Right ventricle myocardium inferior (tissue), 1 donor: ENCODE measurements at regions of chr4 and their contacts with region 1.

Region 1: GRCh38 chr4:168480931-168481611 is 779 bp upstream of the DDX60L start:
- DNase-seq: no peak
- ATAC-seq: peak; percentile 65

Region 2: DNA sequence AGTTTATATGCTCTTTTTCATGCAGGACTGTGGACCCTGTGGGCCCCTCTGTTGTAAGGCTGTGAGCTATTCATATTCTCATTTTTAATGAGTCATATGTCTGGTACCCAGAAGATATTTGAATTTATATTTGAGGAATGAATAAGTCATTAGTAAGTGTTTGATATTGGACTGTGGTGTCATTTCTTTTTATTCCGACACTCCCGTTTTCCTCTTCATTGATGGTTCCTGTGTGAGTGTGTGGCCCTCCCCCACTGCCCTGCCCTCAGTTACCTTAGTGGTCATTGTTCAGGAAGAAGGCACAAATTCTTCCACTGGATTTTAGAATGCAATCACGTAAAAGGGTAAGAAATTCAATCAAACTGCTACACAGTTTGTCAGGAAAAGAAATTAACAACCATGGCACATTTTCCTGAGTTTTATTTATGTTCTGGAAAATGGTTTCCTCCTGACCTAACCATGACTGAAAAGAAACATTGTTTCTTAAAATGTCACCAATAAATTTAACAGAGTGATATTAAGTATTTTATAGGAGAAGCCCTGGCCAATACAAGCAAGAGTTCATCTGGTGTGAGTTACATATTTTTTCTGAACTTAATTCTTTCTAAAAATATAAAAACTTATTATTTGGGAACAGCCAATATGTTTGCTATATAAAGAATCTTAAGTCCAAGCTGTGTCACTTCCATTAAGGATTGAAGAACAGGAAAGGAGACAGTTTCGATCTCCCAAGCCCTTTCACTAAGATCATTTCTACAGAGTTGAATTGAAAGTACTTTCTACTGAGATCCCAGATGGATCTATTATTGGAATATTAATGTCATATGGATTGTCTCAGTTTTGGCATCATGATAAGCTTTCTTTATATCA is 759.2 kb before region 1 on chr4:
- intact Hi-C with region 1: no loop called
- DNase-seq: no peak
- ATAC-seq: no peak

Region 3: GRCh38 chr4:168183717-168184608 is 297.1 kb before region 1 on chr4:
- intact Hi-C with region 1: loop called (anchors 10 kb)
- DNase-seq: no peak
- ATAC-seq: peak; percentile 59

Region 4: GRCh38 chr4:168264903-168265302 is 216.2 kb before region 1 on chr4:
- intact Hi-C with region 1: loop called (anchors 5 kb)
- DNase-seq: no peak
- ATAC-seq: peak; percentile 91

Region 5: GRCh38 chr4:168318266-168318895 is 162.7 kb before region 1 on chr4 and contains the start of gene DDX60:
- intact Hi-C with region 1: loop called (anchors 5 kb)
- DNase-seq: peak; percentile 84
- ATAC-seq: peak; percentile 93
- total RNA-seq, gene DDX60: 7.7 TPM

Region 6: DNA sequence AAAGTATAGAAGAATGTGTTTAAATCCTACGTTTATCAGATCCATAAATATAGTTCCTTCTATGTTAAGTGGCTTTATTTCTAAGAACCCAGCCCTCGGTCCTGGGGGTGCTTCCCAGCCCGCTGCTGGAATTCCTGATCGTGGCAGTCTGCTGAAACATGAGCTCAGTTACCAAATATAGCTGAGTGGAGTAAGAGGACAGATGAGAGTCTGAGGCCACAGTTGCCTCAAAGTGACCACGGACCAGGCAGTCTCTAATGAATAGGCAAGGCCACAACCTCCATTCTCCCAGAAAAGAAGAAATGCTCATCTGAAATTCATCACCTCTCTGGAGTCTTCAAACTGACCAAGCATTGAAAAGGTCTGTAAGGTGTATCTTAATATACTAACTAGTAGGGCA is 15.8 kb after region 1 on chr4 and contains the start of gene PALLD:
- intact Hi-C with region 1: loop called (anchors 1 kb)
- DNase-seq: no peak
- ATAC-seq: peak; percentile 94
- total RNA-seq, gene PALLD: 977 TPM